AG04450 (cell line): ENCODE measurements at regions of chr10 and their contacts with region 1.

Region 1: DNA sequence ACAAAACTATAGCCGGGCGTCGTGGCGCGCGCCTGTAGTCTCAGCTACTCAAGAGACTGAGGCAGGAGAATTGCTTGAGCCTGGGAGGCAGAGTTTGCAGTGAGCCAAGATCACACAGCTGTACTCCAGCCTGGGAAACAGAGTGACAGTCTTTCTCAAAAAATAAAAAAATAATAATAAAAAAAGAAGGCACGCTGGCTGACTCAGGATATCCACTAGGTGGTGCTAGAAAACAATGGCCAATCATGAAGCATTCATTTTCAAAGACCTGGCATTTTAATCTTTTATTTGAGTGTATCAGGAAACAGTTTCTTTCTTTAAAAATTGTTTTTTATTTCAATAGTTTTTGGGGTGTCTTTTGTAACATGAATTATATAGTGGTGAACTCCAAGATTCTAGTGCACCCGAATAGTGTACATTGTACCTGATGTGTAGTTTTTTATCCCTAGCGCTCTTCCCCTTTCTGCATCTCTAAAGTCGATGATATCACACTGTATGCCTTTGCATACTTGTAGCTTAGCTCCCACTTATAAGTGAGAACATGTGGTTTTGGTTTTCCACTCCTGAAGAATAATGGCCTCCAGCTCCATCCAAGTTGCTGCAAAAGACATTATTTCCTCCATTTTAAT is 88.6 kb downstream of the LYZL1 start:
- DNase-seq: peak; percentile 7
- H3K4me3 ChIP-seq: no peak overlapping the region
- H3K27ac ChIP-seq: no peak overlapping the region
- H3K27me3 ChIP-seq: peaks cover 6% of the 10 kb centered on the region
- CTCF ChIP-seq: peak; percentile 81

Region 2: DNA sequence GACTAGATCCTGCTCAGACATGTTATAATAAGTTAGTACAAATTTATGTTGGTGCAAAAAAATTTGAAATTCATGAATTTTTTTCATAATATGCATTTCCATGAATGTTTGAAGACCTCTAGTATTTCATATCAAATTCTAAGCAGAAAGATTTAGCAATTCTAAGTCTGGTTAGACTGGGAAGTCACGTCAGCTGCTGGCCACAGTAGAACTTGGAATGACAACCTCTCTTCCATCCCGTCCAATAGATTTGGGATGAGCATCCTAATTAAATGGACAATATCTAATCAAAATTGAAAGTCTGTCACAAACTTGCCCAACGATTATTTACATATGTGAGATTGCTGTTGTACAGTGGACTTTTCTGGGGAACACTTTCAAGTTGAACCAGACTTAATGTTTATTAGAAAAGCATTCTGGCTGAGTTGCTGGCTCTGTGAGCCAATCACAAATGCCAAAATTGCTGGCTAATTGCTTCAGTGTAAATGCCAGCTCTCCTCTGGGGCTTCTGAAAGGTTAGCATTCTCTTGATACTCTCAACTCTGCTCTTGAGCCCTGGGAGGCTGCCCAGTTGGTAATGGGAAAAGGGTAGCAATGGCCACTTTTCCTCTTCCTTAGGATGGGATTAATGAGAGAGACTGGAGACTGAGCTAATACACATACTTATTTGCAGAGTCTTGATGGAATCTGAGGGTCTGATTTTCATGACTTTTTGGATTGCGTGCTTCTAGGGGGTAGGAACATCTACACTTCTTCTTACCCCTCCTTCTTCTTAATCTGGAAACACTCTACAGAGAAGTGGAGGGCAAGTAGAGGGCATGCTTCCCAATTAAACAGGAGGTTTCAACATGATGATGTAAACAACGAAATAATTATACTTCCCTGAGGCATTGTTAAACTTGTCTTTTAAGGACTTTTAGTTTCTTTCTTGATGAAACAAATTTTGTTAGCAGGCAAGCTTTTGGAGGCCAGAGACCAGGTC is 446.6 kb before region 1 on chr10:
- CTCF ChIA-PET with region 1: no interaction called
- POLR2A ChIA-PET with region 1: no interaction called
- DNase-seq: no peak
- H3K4me3 ChIP-seq: no peak overlapping the region
- H3K27ac ChIP-seq: no peak overlapping the region
- H3K27me3 ChIP-seq: no peaks in the 10 kb centered on the region
- CTCF ChIP-seq: no peak

Region 3: DNA sequence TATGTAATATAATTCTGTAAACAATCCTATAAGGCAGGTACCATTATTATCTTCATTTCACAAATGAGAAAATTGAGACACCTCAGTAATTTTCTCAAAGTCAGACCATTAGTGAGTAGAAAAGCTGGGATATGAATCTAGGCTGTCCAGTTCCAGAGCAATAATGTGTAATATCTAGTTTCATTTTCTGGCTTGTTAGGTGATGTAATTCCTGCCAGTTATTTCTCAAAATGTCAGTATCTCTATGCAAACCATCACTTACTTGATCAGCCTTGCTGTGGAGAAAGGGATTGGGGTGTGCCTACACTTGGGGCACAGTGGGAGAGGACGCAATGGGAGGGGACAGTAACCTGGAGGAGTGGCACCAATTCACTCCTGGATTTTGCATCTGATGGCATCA is 68.9 kb after region 1 on chr10:
- CTCF ChIA-PET with region 1: interaction called, 14 read pairs
- POLR2A ChIA-PET with region 1: no interaction called
- DNase-seq: no peak
- H3K4me3 ChIP-seq: no peak overlapping the region
- H3K27ac ChIP-seq: no peak overlapping the region
- H3K27me3 ChIP-seq: no peaks in the 10 kb centered on the region
- CTCF ChIP-seq: no peak

Region 4: GRCh38 chr10:30639946-30640786 is 1262.7 kb after region 1 on chr10:
- CTCF ChIA-PET with region 1: no interaction called
- POLR2A ChIA-PET with region 1: no interaction called
- DNase-seq: peak; percentile 42
- H3K4me3 ChIP-seq: no peak overlapping the region
- H3K27ac ChIP-seq: no peak overlapping the region
- H3K27me3 ChIP-seq: no peaks in the 10 kb centered on the region
- CTCF ChIP-seq: peak; percentile 89